Heart left ventricle (tissue), 16 donors: ENCODE measurements at regions of chr2 and their contacts with region 1.

Region 1: GRCh38 chr2:49255409-49255971 is 101.2 kb upstream of the FSHR start:
- DNase-seq: no peak
- ATAC-seq: no peak
- H3K4me3 ChIP-seq: no peak overlapping the region
- H3K27ac ChIP-seq: no peak overlapping the region
- H3K4me1 ChIP-seq: no peaks in the 10 kb centered on the region
- H3K27me3 ChIP-seq: no peaks in the 10 kb centered on the region
- CTCF ChIP-seq: peak in 9 of 12 donors; percentile 19 to 55 (median 36)
- POLR2A ChIP-seq: no peak

Region 2: GRCh38 chr2:49240608-49241007 is 14.9 kb before region 1 on chr2:
- intact Hi-C with region 1: no loop called
- DNase-seq: no peak
- ATAC-seq: no peak
- H3K4me3 ChIP-seq: no peak overlapping the region
- H3K27ac ChIP-seq: no peak overlapping the region
- H3K4me1 ChIP-seq: no peaks in the 10 kb centered on the region
- H3K27me3 ChIP-seq: no peaks in the 10 kb centered on the region
- CTCF ChIP-seq: no peak
- POLR2A ChIP-seq: no peak

Region 3: GRCh38 chr2:49332415-49332814 is 76.9 kb after region 1 on chr2:
- intact Hi-C with region 1: loop called in 2 of 10 experiments (anchors 5 to 10 kb)
- DNase-seq: no peak
- ATAC-seq: no peak
- H3K4me3 ChIP-seq: no peak overlapping the region
- H3K27ac ChIP-seq: no peak overlapping the region
- H3K4me1 ChIP-seq: no peaks in the 10 kb centered on the region
- H3K27me3 ChIP-seq: no peaks in the 10 kb centered on the region
- CTCF ChIP-seq: peak in 2 of 12 donors; percentile 24 to 29
- POLR2A ChIP-seq: no peak

Region 4: DNA sequence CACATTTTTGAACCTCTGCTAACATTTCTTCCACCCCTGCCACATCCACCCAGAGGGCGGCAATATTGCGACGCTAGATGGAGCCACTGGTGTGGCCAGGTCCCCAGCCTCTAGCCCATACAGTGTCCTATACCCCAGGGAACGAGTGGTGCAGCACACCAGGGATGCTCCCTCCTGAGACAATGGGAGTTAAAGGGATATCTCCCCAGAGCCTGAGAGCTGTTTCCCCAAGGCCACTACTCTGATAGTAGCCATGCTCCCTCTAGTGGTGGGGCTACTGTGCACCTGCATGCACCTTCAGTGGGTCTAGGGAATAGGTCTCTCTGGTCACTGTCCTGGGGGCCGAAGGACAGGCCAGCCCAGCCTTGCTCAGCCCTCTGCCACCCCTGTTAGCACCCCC is 235.2 kb after region 1 on chr2:
- intact Hi-C with region 1: loop called in 1 of 10 experiments (anchors 5 kb)
- DNase-seq: peak in 3 of 5 donors; percentile 18 to 47 (median 23)
- ATAC-seq: peak in 2 of 4 donors; percentile 50 to 62
- H3K4me3 ChIP-seq: no peak overlapping the region
- H3K27ac ChIP-seq: no peak overlapping the region
- H3K4me1 ChIP-seq: no peaks in the 10 kb centered on the region
- H3K27me3 ChIP-seq: no peaks in the 10 kb centered on the region
- CTCF ChIP-seq: peak; percentile 19 to 46 (median 38)
- POLR2A ChIP-seq: no peak

Region 5: DNA sequence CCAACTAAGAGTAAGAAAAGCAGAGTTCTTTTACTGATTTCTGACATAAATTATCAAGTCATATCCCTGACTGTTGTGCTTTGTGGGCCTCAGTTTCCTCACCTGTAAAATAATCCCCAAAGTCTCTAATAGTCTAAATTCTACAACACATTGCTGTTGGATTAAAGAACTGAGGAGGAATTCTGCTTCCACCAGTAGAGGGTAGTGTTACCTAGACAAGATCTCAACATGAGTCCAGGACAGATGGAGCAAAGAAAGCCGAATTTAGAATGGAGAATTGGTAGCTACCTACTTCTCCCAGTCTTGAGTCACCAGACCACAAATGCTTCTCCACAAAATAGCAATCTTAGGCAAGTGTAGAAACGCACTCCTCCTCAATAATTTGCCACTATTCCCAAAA is 361.3 kb after region 1 on chr2:
- intact Hi-C with region 1: loop called in 1 of 10 experiments (anchors 10 kb)
- DNase-seq: no peak
- ATAC-seq: peak in 1 of 4 donors; percentile 36
- H3K4me3 ChIP-seq: no peak overlapping the region
- H3K27ac ChIP-seq: no peak overlapping the region
- H3K4me1 ChIP-seq: no peaks in the 10 kb centered on the region
- H3K27me3 ChIP-seq: no peaks in the 10 kb centered on the region
- CTCF ChIP-seq: peak in 10 of 12 donors; percentile 16 to 57 (median 42)
- POLR2A ChIP-seq: no peak

Region 6: DNA sequence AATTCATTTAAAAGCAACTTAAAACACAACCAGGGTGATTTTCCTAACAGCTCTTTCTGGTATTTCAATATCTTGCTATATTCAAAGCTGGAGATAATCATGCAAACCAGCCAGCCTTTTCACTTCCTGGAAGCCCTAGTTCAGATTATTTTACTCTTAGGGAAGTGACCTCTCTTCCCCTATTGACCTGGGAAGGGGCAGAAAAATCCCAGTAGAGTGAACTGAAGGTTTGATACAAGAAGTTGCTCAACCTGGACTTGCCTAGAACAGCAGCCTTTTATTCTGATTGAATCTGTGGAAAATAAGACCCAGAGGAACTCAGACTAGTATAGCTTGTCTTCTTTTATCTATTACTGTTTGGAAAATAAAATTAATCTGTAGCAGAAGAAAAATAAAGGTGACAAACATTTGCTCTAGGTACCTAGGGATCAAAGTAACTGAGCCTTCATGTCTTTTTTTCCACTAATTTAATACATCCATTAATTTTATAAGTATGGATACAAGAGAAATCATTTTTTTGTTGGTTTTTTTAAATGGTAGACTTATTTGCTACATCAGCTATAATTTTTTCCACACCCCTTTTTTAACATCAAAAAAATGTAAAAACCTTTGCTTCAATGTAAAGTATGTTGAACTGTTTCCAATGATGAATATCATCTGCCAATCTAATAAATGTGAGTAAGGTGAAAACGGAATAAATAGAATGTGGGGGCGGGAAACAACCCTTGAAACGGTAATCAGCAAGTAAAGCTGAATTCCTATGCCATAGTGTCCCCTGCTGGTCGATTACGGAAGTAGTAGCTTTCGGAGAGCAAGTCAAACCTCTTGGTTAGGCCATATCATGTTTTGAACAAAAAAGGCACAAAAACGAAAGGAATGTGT is 1146.5 kb after region 1 on chr2:
- intact Hi-C with region 1: loop called in 1 of 10 experiments (anchors 10 kb)
- DNase-seq: peak in 1 of 5 donors; percentile 17
- ATAC-seq: no peak
- H3K4me3 ChIP-seq: no peak overlapping the region
- H3K27ac ChIP-seq: no peak overlapping the region
- H3K4me1 ChIP-seq: no peaks in the 10 kb centered on the region
- H3K27me3 ChIP-seq: peaks cover 0 to 8% (median 0%) of the 10 kb centered on the region in 9 donors
- CTCF ChIP-seq: peak; percentile 46 to 74 (median 64)
- POLR2A ChIP-seq: no peak

Region 7: DNA sequence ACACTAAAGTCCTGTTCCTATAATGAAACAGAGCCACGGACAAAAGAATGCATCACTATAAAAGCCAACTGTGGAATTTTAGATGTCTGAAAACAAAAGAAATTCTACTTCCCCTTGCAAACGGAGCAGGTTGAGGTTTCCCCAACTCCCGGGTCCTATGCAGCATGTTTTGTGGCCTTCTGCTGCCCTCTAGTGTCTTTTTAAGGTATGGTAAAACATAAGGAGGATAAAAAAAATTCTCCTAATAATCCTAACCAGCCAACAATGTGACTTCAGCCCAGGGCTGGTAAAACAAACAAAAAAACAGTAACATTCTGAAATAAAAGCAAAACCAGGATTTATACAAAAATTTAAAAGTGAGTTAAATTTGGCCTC is 1237.0 kb after region 1 on chr2:
- intact Hi-C with region 1: loop called in 1 of 10 experiments (anchors 10 kb)
- DNase-seq: peak in 3 of 5 donors; percentile 15 to 26 (median 20)
- ATAC-seq: peak in 3 of 4 donors; percentile 72 to 88 (median 76)
- H3K4me3 ChIP-seq: peak overlapping the region in 7 of 12 donors; percentile 3 to 44 (median 20)
- H3K27ac ChIP-seq: no peak overlapping the region
- H3K4me1 ChIP-seq: peaks cover 0 to 13% (median 6%) of the 10 kb centered on the region in 12 donors
- H3K27me3 ChIP-seq: peaks cover 0 to 16% (median 0%) of the 10 kb centered on the region in 9 donors
- CTCF ChIP-seq: peak; percentile 49 to 80 (median 68)
- POLR2A ChIP-seq: no peak